HCT116 (cell line): ENCODE measurements at regions of chr7 and their contacts with region 1.

Region 1: DNA sequence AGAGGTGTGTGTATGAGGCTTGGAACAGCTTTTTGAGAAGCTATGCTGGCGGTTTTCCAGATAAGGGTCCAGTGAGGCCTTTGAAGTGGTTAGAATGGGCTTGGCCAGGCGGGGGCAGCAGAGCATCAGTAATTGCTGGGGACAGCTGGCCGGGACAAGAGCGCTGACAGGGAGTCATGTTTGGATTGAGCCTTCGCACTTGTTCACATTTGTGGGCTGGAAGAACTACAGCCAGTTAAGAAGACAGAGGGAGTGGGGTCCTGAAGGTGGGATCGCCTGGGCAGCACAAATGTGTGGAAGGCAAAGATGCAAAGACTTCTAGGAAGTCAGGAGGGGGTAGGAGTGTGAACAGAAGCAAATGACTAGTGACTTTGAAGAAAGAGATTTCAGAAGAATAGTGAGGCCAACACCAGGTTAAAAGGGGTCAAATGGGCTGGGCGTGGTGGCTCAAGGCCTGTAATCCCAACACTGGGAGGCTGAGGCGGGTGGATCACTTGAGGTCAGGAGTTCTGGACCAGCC is 12.7 kb upstream of the SDHAF3 start:
- DNase-seq: peak; percentile 59
- ATAC-seq: peak; percentile 99
- H3K4me3 ChIP-seq: no peak overlapping the region
- H3K27ac ChIP-seq: no peak overlapping the region
- H3K4me1 ChIP-seq: no peaks in the 10 kb centered on the region; a peak in 1 of 4 replicates
- H3K27me3 ChIP-seq: no peaks in the 10 kb centered on the region; the same call in 1 of the 2 replicates
- CTCF ChIP-seq: peak; percentile 72 to 90 (median 79)
- POLR2A ChIP-seq: no peak
- RAD21 ChIP-seq: peak; percentile 92

Region 2: DNA sequence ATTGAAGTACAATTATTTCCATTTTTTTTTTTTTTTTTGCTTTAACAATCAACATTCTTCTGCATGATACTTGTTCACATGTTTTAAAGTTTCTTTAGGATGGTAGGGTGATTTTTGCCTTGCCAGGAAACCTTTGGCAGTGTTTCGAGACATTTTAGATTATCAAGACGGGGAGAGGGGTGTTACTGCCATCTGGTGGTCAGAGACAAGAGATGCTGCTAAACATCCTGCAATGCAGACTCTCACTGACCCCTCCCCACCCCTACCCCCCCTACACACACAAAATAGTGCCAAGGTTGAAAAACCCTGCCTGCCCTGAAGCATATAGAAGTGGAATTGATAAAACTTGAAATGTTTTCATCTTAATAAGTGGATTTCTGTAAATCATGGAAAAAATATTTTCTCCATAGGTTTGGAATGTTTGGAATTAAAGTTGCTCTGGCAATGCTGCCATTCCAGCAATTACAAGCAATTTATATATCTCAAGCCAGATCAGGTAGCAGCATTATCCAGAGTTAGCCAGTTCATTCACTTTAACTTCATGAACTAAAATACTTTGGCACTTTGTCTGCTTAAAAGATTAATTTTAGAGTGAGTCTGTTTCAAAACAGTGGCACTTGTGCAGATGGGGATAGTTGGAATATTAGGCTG is 74.8 kb after region 1 on chr7:
- CTCF ChIA-PET with region 1: interaction called, 8 read pairs
- POLR2A ChIA-PET with region 1: no interaction called
- RAD21 ChIA-PET with region 1: interaction called in 1 of 2 experiments, 3 read pairs
- intact Hi-C with region 1: loop called (anchors 1 kb)
- DNase-seq: peak; percentile 29
- ATAC-seq: peak; percentile 64; the same call in 1 of the 2 replicates
- H3K4me3 ChIP-seq: no peak overlapping the region
- H3K27ac ChIP-seq: no peak overlapping the region
- H3K4me1 ChIP-seq: no peaks in the 10 kb centered on the region
- H3K27me3 ChIP-seq: no peaks in the 10 kb centered on the region
- CTCF ChIP-seq: peak; percentile 32 to 75 (median 73); a peak in 5 of 6 replicates
- POLR2A ChIP-seq: no peak
- RAD21 ChIP-seq: peak; percentile 57

Region 3: GRCh38 chr7:97506728-97507127 is 401.9 kb after region 1 on chr7:
- CTCF ChIA-PET with region 1: no interaction called
- POLR2A ChIA-PET with region 1: no interaction called
- RAD21 ChIA-PET with region 1: no interaction called
- intact Hi-C with region 1: loop called (anchors 10 kb)
- DNase-seq: no peak
- ATAC-seq: no peak
- H3K4me3 ChIP-seq: no peak overlapping the region
- H3K27ac ChIP-seq: no peak overlapping the region
- H3K4me1 ChIP-seq: no peaks in the 10 kb centered on the region
- H3K27me3 ChIP-seq: no peaks in the 10 kb centered on the region
- CTCF ChIP-seq: no peak
- POLR2A ChIP-seq: no peak
- RAD21 ChIP-seq: no peak

Region 4: DNA sequence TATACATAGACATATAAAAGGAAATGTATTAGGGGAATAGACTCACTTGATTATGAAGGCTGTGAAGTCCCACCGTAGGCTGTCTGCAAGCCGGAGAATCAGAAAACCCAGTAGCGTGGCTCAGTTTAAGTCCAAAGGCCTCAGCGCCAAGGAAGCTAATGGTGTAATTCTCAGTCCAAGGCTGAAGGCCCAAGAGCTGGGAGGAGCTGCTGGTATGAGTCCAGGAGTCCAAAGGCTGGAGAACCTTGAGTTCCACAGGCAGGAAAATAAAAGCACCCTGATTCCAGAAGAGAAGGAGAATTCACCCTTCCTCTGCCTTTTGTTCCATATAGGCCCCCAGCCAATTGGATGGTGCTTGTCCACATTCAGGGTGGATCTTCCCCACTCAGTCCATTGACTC is 460.9 kb after region 1 on chr7:
- CTCF ChIA-PET with region 1: no interaction called
- POLR2A ChIA-PET with region 1: no interaction called
- RAD21 ChIA-PET with region 1: no interaction called
- intact Hi-C with region 1: no loop called
- DNase-seq: no peak
- ATAC-seq: no peak
- H3K4me3 ChIP-seq: no peak overlapping the region
- H3K27ac ChIP-seq: no peak overlapping the region
- H3K4me1 ChIP-seq: no peaks in the 10 kb centered on the region
- H3K27me3 ChIP-seq: no peaks in the 10 kb centered on the region
- CTCF ChIP-seq: no peak
- POLR2A ChIP-seq: no peak
- RAD21 ChIP-seq: no peak

Region 5: DNA sequence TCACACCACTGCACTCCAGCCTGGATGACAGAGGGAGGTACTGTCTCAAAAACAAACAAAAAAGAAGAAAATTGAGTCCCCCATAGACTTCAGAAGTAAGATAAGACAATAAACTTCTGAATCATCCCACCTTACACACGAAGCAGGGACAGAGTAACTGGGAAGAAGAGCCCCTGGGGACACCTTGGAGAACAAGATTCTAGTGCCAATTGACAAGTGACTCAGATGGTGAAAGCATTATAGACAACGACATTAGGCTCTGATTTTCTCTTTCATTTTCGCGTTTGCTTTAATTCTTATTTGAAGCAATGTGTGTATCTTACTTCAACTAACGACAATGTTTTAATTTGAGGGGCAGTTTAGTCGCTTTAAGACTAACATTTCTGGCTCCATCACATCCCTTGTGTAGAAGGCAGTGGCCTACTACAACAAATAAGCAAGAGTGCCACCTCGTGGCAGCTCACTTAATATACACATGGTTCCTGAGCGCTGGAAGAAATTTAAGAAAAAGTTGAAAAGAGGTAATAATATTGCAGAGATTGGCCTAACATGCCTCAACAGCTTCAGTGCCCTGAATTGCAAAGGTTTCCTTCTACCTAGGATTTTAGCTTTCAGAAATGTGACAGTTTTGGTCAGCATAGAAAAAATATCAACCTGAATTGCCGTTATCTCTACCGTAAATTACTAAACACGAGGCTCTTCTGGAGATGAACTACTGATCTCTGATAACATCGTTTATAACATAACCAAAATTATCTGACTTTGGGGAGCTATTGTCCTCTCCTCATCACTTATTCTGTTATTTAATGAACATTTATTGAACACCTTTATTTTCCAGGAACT is 730.7 kb after region 1 on chr7:
- CTCF ChIA-PET with region 1: interaction called, 17 read pairs
- POLR2A ChIA-PET with region 1: no interaction called
- RAD21 ChIA-PET with region 1: no interaction called
- intact Hi-C with region 1: loop called (anchors 2 kb)
- DNase-seq: peak; percentile 50
- ATAC-seq: peak; percentile 94
- H3K4me3 ChIP-seq: no peak overlapping the region
- H3K27ac ChIP-seq: no peak overlapping the region
- H3K4me1 ChIP-seq: no peaks in the 10 kb centered on the region
- H3K27me3 ChIP-seq: peaks cover 23% of the 10 kb centered on the region
- CTCF ChIP-seq: peak; percentile 63 to 80 (median 69)
- POLR2A ChIP-seq: no peak
- RAD21 ChIP-seq: peak; percentile 82

Region 6: DNA sequence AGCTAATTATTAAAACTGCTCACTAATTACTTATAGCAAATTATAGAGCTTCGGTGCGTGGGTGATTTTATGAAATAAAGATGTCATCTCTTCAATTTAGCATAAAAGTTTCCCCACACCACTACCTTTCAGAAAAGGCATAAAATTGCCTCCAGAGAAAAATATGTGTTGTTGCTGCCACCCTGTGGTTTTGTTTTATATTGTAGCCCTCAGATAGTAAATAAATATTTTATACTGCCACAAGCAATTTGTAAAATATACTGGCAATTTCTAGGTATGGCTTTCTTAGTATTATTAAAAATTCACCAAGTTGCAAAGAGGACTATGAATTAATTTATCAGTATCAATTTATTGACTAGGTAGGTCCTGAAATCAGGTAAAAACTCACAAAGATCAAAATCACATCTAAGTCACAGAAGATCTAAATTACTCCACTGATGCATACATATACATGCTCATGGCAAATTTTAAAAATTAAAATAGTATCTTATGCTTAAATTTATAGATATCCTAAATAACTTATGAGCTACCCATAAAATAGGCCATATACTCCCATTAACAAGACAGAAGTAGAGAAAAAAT is 740.9 kb after region 1 on chr7:
- CTCF ChIA-PET with region 1: interaction called, 8 read pairs
- POLR2A ChIA-PET with region 1: no interaction called
- RAD21 ChIA-PET with region 1: no interaction called
- intact Hi-C with region 1: loop called (anchors 1 kb)
- DNase-seq: peak; percentile 13
- ATAC-seq: peak; percentile 67
- H3K4me3 ChIP-seq: no peak overlapping the region
- H3K27ac ChIP-seq: no peak overlapping the region
- H3K4me1 ChIP-seq: no peaks in the 10 kb centered on the region
- H3K27me3 ChIP-seq: no peaks in the 10 kb centered on the region
- CTCF ChIP-seq: peak; percentile 27 to 62 (median 54); a peak in 4 of 6 replicates
- POLR2A ChIP-seq: no peak
- RAD21 ChIP-seq: peak; percentile 64

Region 7: DNA sequence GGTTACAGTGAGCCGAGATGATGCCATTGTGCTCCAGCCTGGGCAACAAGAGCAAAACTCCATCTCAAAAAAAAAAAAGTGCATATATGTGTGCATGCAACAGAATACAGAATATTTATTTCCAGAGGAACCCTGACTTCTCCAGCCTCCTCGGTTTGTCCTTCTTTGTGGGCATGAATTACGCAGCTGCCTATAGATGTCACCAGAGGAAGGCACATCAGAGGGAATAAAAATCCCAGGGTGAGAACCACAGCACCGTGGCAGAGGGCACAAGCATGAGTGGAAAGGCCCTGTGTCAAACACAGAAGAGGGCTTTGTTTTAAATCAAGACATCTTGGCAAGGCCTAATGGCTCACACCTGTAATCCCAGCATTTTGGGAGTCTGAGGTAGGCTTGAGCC is 909.6 kb after region 1 on chr7:
- CTCF ChIA-PET with region 1: interaction called, 5 read pairs
- POLR2A ChIA-PET with region 1: no interaction called
- RAD21 ChIA-PET with region 1: no interaction called
- intact Hi-C with region 1: loop called (anchors 10 kb)
- DNase-seq: no peak
- ATAC-seq: no peak
- H3K4me3 ChIP-seq: no peak overlapping the region
- H3K27ac ChIP-seq: no peak overlapping the region
- H3K4me1 ChIP-seq: 0 out of 4 replicates have a peak, but pooled peaks cover 0 to 3% of the 10 kb centered on the region in 2 experiments
- H3K27me3 ChIP-seq: no peaks in the 10 kb centered on the region
- CTCF ChIP-seq: no peak
- POLR2A ChIP-seq: no peak
- RAD21 ChIP-seq: peak; percentile 16; the same call in 1 of the 2 replicates

Region 8: DNA sequence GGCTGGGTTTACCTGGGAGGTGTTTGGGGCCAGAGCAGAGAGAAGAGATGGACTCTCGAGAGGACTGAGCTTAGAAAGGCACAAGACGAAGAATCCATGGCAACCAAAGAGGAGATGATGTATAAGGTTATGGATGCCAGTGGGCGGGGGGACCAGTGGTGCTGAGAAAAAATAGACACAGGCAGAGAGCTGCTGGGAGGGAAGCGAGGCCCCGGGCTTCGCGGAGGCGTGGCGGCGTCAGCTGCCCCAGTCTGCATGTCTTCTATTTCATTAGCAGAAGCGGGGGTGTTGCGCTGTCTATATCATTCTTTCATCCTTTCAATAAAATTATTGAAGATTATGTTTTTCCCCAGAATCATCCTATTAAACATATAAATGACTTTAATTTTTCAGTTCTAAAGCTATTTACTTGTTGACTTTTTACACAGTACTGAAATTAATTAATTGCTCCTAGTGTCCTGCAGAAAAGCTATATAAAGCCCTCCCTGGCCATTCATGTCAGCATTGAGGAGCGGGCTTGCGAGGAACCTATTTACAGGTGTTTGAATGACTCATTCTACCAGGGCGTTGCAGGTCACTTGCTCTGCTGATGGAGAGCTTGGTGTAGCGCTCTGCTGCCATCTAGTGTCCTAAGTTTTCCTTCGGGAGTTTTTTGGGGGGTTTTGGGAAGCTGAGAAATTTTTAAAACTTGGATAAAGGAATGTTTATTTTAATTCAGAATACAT is 1063.6 kb after region 1 on chr7:
- CTCF ChIA-PET with region 1: no interaction called
- POLR2A ChIA-PET with region 1: no interaction called
- RAD21 ChIA-PET with region 1: no interaction called
- intact Hi-C with region 1: loop called (anchors 10 kb)
- DNase-seq: peak; percentile 67
- ATAC-seq: peak; percentile 72
- H3K4me3 ChIP-seq: no peak overlapping the region
- H3K27ac ChIP-seq: no peak overlapping the region
- H3K4me1 ChIP-seq: peaks cover 0 to 2% of the 10 kb centered on the region in 2 experiments; a peak in 1 of 4 replicates
- H3K27me3 ChIP-seq: no peaks in the 10 kb centered on the region
- CTCF ChIP-seq: peak; percentile 80 to 85 (median 84)
- POLR2A ChIP-seq: no peak
- RAD21 ChIP-seq: peak; percentile 89